ENCODE measurements at regions of chr1 and their contacts with region 1.

Region 1: DNA sequence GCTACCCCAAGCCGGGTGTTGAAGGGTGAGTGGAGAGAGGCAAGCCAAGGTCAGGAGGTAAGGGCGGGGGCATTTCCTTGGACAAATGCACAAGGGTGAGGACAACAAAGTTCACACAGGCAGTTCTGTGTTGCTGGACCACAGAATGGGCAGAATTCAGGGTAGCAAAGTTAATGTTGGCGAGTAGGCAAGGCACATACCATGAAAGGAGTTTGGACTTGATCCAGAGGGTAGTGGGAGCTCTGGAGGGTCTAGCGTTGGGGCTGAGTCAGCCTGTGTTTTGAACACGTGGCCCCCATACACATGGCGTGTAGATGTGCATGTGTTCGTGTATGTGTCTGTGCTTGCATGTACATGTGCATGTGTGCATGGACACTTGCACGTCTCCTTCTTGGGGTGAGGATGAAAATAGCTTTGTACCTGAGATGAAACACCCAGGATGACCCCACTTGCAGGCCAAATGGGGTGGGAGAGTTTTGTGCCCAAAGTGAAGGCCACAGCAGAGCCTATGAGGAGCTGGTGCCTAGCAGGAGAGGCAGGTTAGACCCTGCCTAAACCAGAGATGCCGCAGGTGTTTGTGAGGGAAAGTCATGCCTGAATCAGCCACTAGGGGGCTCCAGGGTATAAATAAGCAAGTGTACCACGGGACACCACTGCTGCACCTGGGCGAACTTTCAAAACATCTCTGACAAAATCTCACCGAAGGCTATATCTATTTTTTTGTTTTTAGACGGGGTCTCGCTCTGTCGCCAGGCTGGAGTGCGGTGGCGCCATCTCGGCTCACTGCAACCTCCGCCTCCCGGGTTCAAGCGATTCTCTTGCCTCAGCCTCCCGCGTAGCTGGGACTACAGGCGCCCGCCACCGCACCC is 21.8 kb downstream of the SLC27A3 start:
- DNase-seq: peak in 4 of 5 donors; percentile 76 to 83 (median 78)
- ATAC-seq: peak; percentile 9 to 76 (median 61)
- H3K4me3 ChIP-seq: no peak overlapping the region
- H3K27ac ChIP-seq: no peak overlapping the region
- H3K4me1 ChIP-seq: peaks cover 0 to 9% (median 0%) of the 10 kb centered on the region in 12 donors
- H3K27me3 ChIP-seq: no peaks in the 10 kb centered on the region
- CTCF ChIP-seq: peak; percentile 89 to 96 (median 92)
- POLR2A ChIP-seq: no peak

Region 2: GRCh38 chr1:153958111-153958960 is 161.3 kb after region 1 on chr1 and contains the start of gene CRTC2:
- intact Hi-C with region 1: loop called in 1 of 10 experiments (anchors 10 kb)
- DNase-seq: peak; percentile 99 to 100 (median 99)
- ATAC-seq: peak; percentile 88 to 94 (median 90)
- H3K4me3 ChIP-seq: peak within 1 kb of the TSS; percentile 82 to 100 (median 93)
- H3K27ac ChIP-seq: peak within 1 kb of the TSS; percentile 87 to 99 (median 94)
- H3K4me1 ChIP-seq: peaks cover 10 to 74% (median 56%) of the 10 kb centered on the region in 12 donors
- H3K27me3 ChIP-seq: no peaks in the 10 kb centered on the region
- CTCF ChIP-seq: peak in 1 of 12 donors; percentile 6
- POLR2A ChIP-seq: peak in 1 of 2 donors; percentile 80
- total RNA-seq, gene CRTC2: 11.0 to 27.8 (median 18.8) TPM